Transverse colon (tissue), 4 donors: ENCODE measurements at regions of chr17 and their contacts with region 1.

Region 1: DNA sequence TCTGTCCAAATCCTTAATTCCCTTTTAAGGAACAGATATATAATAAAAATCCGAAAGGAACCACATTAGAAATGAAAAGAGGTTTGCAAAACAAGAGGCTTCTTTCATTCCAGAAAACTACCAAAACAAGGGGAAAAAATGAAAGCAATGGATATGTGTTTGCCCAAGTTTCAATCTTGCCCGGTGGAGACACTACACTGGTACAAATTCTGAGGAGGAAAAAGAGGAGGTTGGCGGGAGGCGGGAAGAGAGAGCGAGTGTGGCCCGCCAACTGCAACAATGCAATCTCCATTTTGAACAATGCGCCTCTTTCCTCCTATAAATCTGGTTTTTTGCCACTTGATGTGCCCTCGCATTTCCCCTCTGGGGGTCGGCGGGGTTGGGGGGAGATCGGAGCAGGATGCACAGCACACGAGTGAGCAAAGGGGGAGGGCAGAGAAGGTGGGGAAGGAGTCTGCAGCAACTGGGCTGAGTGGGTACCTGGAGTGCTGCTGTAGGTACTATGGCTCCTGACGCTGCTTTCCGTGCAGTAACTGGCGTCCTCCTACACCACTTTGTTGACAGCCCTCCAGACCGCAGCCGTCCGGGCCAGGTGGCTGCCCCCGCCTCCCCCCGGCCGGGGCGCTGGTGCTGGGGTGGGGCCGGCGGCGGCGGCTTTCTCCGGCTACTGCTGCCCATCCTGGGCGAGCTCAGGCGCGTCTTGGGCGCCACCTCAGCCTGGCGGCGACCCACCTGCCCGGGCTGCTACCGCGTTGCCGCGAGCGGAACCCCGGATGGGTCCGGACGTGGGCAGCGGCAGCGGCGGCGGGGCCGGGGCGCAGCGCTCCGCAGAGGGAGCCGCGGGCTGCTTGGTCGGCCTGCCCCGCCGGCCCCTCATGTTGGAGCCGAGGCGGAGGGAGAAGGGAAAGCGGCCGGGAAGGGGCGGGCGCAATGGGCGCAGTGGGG is 93.8 kb upstream of the PLEKHM1 start:
- DNase-seq: peak; percentile 85
- H3K4me3 ChIP-seq: peak overlapping the region; percentile 53 to 80 (median 60)
- H3K27ac ChIP-seq: peak overlapping the region; percentile 83 to 88 (median 88)
- H3K4me1 ChIP-seq: peaks cover 0 to 28% (median 23%) of the 10 kb centered on the region in 4 donors
- H3K27me3 ChIP-seq: no peaks in the 10 kb centered on the region
- CTCF ChIP-seq: no peak
- EP300 ChIP-seq: no peak
- POLR2A ChIP-seq: peak; percentile 57

Region 2: DNA sequence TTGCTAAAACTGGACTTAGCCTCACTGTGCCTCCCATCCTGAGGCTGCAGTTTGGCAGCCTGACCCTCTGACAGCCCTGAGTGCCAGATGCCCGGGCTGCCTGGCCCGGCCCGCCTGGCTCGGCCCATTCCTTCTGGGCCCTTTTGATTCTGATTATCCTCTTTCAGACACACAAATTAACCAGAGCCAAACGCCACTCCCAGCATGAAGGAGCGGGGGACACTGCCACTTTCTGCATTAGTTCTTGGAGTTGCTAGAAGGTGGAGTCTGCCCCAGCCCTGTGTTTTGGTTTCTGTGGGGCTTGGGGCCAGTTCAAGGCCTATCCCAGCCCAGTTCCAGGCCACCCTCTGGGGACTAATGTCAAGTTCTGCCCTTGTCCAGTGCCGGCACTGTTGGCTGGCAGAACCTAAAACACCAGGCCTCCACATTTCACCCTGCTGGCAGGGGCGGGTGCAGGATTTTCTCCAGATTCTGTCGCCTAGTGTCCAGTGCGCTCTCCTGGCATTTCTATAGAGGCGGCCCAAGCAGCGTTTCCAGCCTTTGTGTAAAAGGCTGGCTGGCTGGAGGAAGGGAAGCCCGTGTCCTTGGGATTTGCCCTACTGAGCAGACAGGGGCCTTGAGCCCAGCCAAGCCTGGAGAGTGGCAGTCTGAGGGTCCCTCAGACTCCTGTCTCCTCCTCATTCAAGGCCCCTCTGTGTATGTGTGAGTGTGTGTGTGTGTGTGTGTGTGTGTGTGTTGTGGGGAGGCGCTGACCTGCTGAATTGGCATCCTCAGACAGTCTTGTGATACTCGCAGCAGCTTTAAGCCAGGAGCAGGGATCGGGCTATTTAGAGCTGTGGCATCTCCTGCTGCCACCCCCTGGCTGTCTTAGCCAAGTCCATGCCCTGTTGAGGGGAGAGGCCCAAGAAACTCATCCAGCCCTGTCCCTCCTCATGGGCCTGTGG is 473.4 kb before region 1 on chr17:
- in situ Hi-C with region 1: no loop called
- intact Hi-C with region 1: no loop called
- DNase-seq: no peak
- H3K4me3 ChIP-seq: no peak overlapping the region
- H3K27ac ChIP-seq: peak overlapping the region; percentile 54 to 79 (median 68)
- H3K4me1 ChIP-seq: peaks cover 0 to 18% (median 2%) of the 10 kb centered on the region in 4 donors
- H3K27me3 ChIP-seq: no peaks in the 10 kb centered on the region
- CTCF ChIP-seq: no peak
- EP300 ChIP-seq: no peak
- POLR2A ChIP-seq: no peak

Region 3: DNA sequence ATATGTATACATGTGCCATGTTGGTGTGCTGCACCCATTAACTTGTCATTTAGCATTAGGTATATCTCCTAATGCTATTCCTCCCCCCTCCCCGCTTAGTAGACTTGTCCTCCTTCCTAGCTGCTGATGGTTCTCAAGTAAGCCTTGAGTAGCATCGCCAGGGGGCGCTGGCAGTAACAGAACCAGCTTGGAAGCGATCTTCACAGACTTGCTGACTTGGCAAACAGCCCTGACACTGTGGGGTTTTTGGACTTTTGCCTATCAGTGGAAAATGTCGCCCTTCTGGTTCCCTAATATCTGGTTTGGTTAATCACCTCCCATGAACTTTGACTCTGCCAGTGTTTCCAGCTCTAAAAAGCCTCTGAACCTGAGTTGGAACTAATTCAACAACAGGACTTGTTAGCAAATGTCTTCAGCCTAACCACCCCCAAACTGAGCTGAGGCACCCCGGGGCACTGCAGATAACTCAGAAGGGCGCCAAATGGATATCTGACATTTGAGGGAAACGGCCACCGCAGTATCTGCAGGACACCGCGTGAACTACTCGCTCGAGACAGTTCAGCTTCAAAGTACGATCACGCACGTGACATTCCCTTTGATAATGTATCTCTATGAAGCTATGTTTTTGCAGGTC is 307.0 kb before region 1 on chr17:
- in situ Hi-C with region 1: no loop called
- intact Hi-C with region 1: no loop called
- DNase-seq: peak; percentile 94
- H3K4me3 ChIP-seq: no peak overlapping the region
- H3K27ac ChIP-seq: peak overlapping the region; percentile 44 to 83 (median 72)
- H3K4me1 ChIP-seq: peaks cover 9 to 30% (median 14%) of the 10 kb centered on the region in 4 donors
- H3K27me3 ChIP-seq: no peaks in the 10 kb centered on the region
- CTCF ChIP-seq: peak; percentile 75 to 94 (median 82)
- EP300 ChIP-seq: no peak
- POLR2A ChIP-seq: no peak

Region 4: GRCh38 chr17:45428050-45428617 is 156.2 kb before region 1 on chr17:
- in situ Hi-C with region 1: loop called in 1 of 4 experiments (anchors 25 kb)
- intact Hi-C with region 1: no loop called
- DNase-seq: peak; percentile 84
- H3K4me3 ChIP-seq: peak overlapping the region in 1 of 4 donors; percentile 5
- H3K27ac ChIP-seq: peak overlapping the region; percentile 64 to 71 (median 66)
- H3K4me1 ChIP-seq: peaks cover 32 to 56% (median 41%) of the 10 kb centered on the region in 4 donors
- H3K27me3 ChIP-seq: peaks cover 32% of the 10 kb centered on the region
- CTCF ChIP-seq: peak; percentile 98 to 100 (median 99)
- EP300 ChIP-seq: no peak
- POLR2A ChIP-seq: no peak

Region 5: DNA sequence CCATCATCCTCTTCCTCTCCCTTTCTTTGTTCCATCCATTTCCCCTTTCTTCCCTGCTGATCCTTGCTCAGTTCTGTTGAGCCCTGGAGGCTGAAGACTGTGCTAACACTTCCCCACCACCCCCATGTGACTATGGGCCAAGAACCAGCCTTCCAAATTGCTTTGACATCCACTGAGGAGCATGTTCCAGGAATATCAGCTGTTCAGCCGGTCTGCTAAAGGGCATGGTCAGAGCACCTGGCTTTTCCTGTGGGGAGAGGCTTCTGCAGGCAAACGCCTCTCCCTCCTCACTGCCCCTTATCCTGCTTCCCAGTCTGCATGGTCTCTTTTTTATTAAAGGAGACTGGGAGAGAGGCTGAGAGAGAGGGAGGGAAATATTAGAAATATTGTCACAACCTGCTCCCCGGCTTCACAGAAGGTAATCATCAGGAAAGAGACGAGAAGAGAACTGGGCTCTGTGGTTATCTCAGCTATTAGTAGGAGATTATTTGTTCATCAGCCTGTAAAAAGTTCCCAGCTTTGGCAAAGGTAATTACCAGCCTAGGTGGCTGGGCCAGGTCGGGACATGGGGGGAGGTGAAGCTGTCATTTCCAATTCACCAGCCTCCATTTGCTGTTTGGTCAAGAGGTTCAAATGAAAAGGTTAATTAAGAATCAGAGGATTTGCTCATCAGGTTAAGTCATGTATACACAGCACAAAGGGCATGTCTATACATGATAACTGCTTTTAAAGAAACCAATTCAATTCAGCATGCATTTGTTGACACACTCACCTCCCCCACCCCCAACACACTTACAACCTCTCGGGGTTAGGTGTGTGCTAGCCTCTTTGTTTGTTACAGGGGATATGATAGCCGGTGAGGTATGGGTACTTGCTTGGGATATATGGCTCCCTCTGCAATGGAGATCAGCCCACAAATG is 116.1 kb after region 1 on chr17:
- in situ Hi-C with region 1: no loop called
- intact Hi-C with region 1: no loop called
- DNase-seq: no peak
- H3K4me3 ChIP-seq: no peak overlapping the region
- H3K27ac ChIP-seq: no peak overlapping the region
- H3K4me1 ChIP-seq: no peaks in the 10 kb centered on the region
- H3K27me3 ChIP-seq: peaks cover 26% of the 10 kb centered on the region
- CTCF ChIP-seq: no peak
- EP300 ChIP-seq: no peak
- POLR2A ChIP-seq: no peak

Region 6: GRCh38 chr17:46072998-46073397 is 488.6 kb after region 1 on chr17:
- in situ Hi-C with region 1: no loop called
- intact Hi-C with region 1: no loop called
- DNase-seq: no peak
- H3K4me3 ChIP-seq: no peak overlapping the region
- H3K27ac ChIP-seq: no peak overlapping the region
- H3K4me1 ChIP-seq: peaks cover 0 to 36% (median 4%) of the 10 kb centered on the region in 4 donors
- H3K27me3 ChIP-seq: no peaks in the 10 kb centered on the region
- CTCF ChIP-seq: no peak
- EP300 ChIP-seq: no peak
- POLR2A ChIP-seq: no peak

Region 7: DNA sequence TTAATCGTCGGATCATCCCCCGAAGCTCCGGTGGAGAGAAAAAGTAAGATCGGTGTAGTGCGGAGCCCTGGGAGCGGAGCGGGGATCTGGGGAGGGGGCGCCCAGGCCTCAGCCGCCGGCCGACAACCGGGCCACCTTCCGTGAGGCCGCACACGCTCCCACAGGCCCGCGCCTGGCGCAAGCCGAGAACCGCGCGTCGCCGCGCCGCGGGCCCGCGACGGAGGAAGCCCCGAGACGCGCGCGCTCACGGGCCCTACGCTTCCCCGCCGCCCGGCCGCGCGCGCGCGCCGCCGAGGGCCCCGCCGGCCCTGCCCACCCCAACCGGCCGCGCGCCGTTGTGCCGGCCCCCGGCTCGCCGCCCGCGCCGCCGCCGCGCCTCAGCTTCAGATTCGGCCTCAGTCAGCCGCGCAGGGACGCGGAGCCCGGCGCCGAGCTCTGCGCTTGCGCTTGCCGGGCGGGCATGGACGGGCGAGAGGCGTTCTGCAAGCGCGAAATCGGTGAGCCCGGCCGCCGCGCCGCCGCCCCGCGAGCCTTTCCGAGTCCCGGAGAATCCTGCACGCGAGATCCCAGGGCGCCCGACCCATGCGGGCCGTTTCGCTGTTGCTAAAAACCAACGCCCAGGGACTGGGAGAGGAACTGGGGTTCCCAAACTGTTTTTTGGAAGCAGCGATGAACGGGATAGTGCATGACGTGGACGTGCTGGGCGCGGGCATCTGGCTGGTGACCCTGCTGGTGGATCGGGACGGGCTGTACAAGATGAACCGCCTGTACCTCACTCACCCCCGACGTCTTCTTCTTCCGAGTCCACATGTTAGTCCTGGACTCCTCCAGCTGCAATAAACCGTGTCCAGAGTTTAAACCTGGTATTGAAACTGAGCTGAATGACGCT is 682.5 kb after region 1 on chr17:
- in situ Hi-C with region 1: loop called in 3 of 4 experiments (anchors 25 kb)
- intact Hi-C with region 1: no loop called
- DNase-seq: peak; percentile 87
- H3K4me3 ChIP-seq: peak overlapping the region; percentile 52 to 86 (median 65)
- H3K27ac ChIP-seq: peak overlapping the region; percentile 91 to 98 (median 96)
- H3K4me1 ChIP-seq: peaks cover 0 to 17% (median 7%) of the 10 kb centered on the region in 4 donors
- H3K27me3 ChIP-seq: no peaks in the 10 kb centered on the region
- CTCF ChIP-seq: peak in 1 of 5 experiments; percentile 32
- EP300 ChIP-seq: no peak
- POLR2A ChIP-seq: no peak